GM12878 (cell line): ENCODE measurements at regions of chr5 and their contacts with region 1.

Region 1: DNA sequence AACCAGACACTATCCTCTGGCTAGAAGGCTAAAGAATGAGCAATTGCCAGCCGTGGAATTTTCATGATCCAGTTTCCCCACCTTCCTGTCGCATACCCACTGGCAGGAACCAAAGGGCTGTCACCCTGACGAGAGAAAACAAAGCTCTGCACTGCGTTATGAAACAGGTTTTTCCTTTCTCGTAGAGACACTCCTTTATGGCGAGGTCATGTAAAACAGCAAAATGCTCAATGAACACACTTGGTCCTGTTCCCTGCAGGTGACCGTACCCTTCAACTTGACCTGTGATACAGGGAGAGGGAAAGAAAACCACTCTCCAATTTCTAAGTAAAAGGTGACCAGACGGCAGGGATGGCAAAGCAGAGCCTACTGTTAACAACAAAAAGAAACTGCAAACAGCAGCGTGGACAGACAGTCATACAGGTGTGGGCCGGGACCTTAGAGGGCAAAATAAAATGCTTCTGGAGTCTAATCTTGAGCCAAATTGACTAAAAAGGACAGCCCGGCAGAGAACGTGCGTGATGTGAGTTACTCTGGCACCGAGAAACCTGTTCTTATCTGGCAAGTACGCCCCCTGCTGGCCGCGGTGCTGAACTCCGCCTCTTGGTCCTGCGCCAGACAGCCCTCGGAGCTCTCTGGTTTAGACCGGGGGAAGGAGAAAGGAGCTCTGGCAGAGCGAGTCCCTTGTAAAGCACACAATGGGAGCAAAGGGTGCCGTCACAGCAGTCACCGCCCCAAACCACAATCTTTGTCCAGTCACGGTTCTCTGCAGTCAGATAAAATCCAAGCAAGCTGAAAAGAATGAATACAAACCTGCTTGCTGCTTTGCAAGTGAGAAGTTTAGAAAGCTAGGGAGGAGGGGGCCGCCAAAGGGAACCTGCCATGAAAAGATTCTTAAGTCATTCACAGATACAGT is 98.9 kb downstream of the EFNA5 start:
- DNase-seq: peak; percentile 83
- ATAC-seq: peak; percentile 88
- H3K4me3 ChIP-seq: peak overlapping the region; percentile 64
- H3K27ac ChIP-seq: peak overlapping the region; percentile 95
- H3K4me1 ChIP-seq: peaks cover 27% of the 10 kb centered on the region
- H3K27me3 ChIP-seq: no peaks in the 10 kb centered on the region
- CTCF ChIP-seq: peak; percentile 92 to 94 (median 94)
- EP300 ChIP-seq: no peak
- POLR2A ChIP-seq: peak; percentile 63
- RAD21 ChIP-seq: peak; percentile 89

Region 2: DNA sequence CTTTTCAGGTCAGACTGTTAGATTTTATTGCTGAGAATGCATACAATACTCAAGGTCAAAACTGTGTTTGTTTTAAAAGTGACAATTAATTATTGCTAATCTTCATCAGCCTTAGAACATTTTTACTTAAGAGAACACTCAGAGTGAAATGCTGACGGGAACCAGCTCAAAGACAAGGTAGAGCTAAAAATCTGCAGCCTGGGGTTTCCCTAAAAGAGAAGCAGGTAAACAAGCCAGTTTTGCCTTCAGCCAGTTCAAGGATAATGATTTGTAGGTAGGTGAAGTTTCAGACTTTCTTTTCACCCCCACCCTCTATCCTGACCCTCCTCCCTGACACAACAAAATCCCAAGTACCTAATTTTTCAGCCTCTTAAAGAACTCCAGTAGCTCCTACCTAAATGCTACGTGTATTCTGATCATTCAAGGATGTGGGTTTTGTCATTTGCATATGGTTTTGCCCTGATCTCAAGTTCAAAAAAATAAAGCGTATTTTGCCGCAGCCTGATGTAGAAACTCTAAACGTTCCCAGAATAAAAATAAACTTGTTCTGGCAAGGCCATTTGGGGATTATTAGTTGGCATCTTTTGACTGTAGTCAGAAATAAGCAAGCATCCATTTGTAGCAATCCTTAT is 308.4 kb before region 1 on chr5:
- CTCF ChIA-PET with region 1: interaction called, 5 read pairs
- POLR2A ChIA-PET with region 1: no interaction called
- RAD21 ChIA-PET with region 1: interaction called, 13 read pairs
- SMC1A ChIA-PET with region 1: interaction called, 14 read pairs
- in situ Hi-C with region 1: no loop called
- intact Hi-C with region 1: no loop called
- DNase-seq: peak; percentile 73
- ATAC-seq: peak; percentile 87
- H3K4me3 ChIP-seq: no peak overlapping the region; the same call in 1 of the 2 replicates
- H3K27ac ChIP-seq: no peak overlapping the region
- H3K4me1 ChIP-seq: peaks cover 15% of the 10 kb centered on the region; the same call in 1 of the 2 replicates
- H3K27me3 ChIP-seq: no peaks in the 10 kb centered on the region
- CTCF ChIP-seq: no peak
- EP300 ChIP-seq: peak in 1 of 2 experiments; percentile 65; a peak in 1 of 4 replicates
- POLR2A ChIP-seq: no peak
- RAD21 ChIP-seq: no peak

Region 3: GRCh38 chr5:107359033-107359915 is 212.6 kb before region 1 on chr5:
- CTCF ChIA-PET with region 1: interaction called, 12 read pairs
- POLR2A ChIA-PET with region 1: interaction called, 12 read pairs
- RAD21 ChIA-PET with region 1: interaction called, 42 read pairs
- SMC1A ChIA-PET with region 1: interaction called, 30 read pairs
- in situ Hi-C with region 1: no loop called
- intact Hi-C with region 1: no loop called
- DNase-seq: no peak
- ATAC-seq: no peak; the same call in 2 of the 3 replicates
- H3K4me3 ChIP-seq: no peak overlapping the region
- H3K27ac ChIP-seq: no peak overlapping the region
- H3K4me1 ChIP-seq: peaks cover 6% of the 10 kb centered on the region; the same call in 1 of the 2 replicates
- H3K27me3 ChIP-seq: no peaks in the 10 kb centered on the region; a peak in 1 of 4 replicates
- CTCF ChIP-seq: no peak
- EP300 ChIP-seq: no peak
- POLR2A ChIP-seq: no peak
- RAD21 ChIP-seq: no peak

Region 4: GRCh38 chr5:107425541-107426256 is 146.2 kb before region 1 on chr5:
- CTCF ChIA-PET with region 1: interaction called, 8 read pairs
- POLR2A ChIA-PET with region 1: interaction called, 3 read pairs
- RAD21 ChIA-PET with region 1: interaction called, 7 read pairs
- SMC1A ChIA-PET with region 1: interaction called, 17 read pairs
- in situ Hi-C with region 1: no loop called
- intact Hi-C with region 1: no loop called
- DNase-seq: no peak
- ATAC-seq: no peak
- H3K4me3 ChIP-seq: no peak overlapping the region
- H3K27ac ChIP-seq: no peak overlapping the region
- H3K4me1 ChIP-seq: no peaks in the 10 kb centered on the region
- H3K27me3 ChIP-seq: no peaks in the 10 kb centered on the region; a peak in 1 of 4 replicates
- CTCF ChIP-seq: no peak
- EP300 ChIP-seq: no peak
- POLR2A ChIP-seq: no peak
- RAD21 ChIP-seq: no peak

Region 5: DNA sequence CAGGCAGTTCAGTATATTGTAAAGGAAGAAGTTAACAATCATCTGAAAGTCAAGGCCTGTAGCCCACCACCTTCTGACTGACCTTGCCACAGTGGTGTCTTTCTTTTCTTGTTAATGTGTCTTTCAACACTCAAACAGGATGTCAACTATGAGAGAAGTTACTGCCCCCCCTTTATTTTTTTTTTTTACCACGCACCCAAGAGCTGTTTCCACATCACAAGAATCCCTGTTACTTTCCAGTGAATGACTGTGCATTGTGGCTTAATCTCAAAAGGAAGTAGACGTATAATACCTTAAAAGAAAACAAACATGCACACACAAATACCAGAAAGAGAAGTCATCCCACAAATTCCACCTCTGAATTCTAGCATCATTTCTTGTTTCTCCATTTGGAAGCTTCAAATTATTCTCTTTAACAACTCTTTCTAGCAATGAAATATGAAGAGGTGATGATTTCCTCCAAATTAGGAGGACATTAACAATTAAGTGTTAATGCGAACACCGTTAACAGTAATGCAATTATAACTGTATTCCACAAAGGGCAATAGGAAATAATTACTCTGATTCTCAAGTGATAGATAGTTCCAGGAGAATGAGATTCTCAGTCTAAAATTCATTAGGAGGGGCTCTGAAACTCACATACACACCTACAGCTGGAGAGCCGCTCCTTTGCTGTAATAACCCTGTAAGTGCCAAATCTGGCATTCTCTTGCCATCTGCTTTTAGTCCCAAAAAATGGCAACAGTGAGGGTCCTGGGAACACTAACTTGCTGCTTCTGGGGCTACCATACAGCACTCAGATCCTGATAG is 102.2 kb before region 1 on chr5:
- CTCF ChIA-PET with region 1: interaction called, 8 read pairs
- POLR2A ChIA-PET with region 1: interaction called, 7 read pairs
- RAD21 ChIA-PET with region 1: interaction called, 16 read pairs
- SMC1A ChIA-PET with region 1: interaction called, 53 read pairs
- in situ Hi-C with region 1: no loop called
- intact Hi-C with region 1: no loop called
- DNase-seq: no peak
- ATAC-seq: no peak; the same call in 1 of the 3 replicates
- H3K4me3 ChIP-seq: no peak overlapping the region
- H3K27ac ChIP-seq: no peak overlapping the region
- H3K4me1 ChIP-seq: peaks cover under 1% of the 10 kb centered on the region; the same call in 1 of the 2 replicates
- H3K27me3 ChIP-seq: no peaks in the 10 kb centered on the region; a peak in 1 of 4 replicates
- CTCF ChIP-seq: no peak
- EP300 ChIP-seq: no peak
- POLR2A ChIP-seq: no peak
- RAD21 ChIP-seq: no peak

Region 6: GRCh38 chr5:107542428-107542827 is 29.5 kb before region 1 on chr5:
- CTCF ChIA-PET with region 1: interaction called, 34 read pairs
- POLR2A ChIA-PET with region 1: no interaction called
- RAD21 ChIA-PET with region 1: interaction called, 40 read pairs
- SMC1A ChIA-PET with region 1: interaction called, 58 read pairs
- in situ Hi-C with region 1: no loop called
- intact Hi-C with region 1: loop called (anchors 2 kb)
- DNase-seq: peak; percentile 52
- ATAC-seq: peak; percentile 75
- H3K4me3 ChIP-seq: no peak overlapping the region; the same call in 1 of the 2 replicates
- H3K27ac ChIP-seq: no peak overlapping the region
- H3K4me1 ChIP-seq: peaks cover 3% of the 10 kb centered on the region; the same call in 1 of the 2 replicates
- H3K27me3 ChIP-seq: no peaks in the 10 kb centered on the region
- CTCF ChIP-seq: no peak
- EP300 ChIP-seq: no peak
- POLR2A ChIP-seq: no peak
- RAD21 ChIP-seq: no peak

Region 7: DNA sequence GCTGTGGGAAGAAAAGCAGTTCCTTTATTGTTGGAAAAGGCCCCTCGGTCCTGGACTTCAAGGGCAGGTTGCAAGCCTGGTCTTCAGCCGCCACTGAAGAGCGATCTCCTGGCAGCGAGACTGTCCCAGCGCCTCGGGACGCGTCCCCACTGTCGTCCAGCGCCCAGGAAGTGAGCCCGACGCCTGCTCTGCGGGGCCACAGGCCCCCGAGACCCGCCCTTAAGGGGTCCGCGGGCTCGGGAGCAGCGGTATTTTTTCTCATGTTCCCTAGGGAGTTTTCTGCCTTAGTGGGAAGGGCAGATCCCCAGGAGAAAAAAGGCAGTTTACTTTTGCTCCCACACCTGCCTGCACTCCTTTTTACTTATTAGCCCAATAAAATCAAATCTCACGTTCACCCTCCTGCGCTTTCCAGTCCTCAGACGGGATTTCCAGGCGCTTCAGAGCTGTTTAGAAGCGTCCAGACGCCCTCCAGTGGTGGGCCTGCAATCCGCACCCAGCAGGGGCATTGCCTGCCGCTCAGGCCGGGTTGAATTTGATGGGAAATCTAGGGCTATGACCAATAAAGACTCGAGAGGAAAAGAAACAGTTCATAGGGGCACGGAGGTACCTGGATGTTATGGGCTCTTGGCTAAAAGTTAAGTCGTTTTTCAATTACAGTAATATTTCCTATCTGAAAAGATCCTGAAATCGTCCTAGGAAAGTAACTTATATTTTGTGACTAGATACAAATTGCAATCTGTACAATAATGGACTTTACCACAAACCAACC is 101.7 kb after region 1 on chr5:
- CTCF ChIA-PET with region 1: interaction called, 30 read pairs
- POLR2A ChIA-PET with region 1: interaction called, 5 read pairs
- RAD21 ChIA-PET with region 1: interaction called, 17 read pairs
- SMC1A ChIA-PET with region 1: interaction called, 5 read pairs
- in situ Hi-C with region 1: no loop called
- intact Hi-C with region 1: loop called (anchors 2 kb)
- DNase-seq: peak; percentile 59
- ATAC-seq: peak; percentile 72
- H3K4me3 ChIP-seq: peak overlapping the region; percentile 69
- H3K27ac ChIP-seq: peak overlapping the region; percentile 26; the same call in 1 of the 2 replicates
- H3K4me1 ChIP-seq: peaks cover 10% of the 10 kb centered on the region
- H3K27me3 ChIP-seq: peaks cover 0 to 4% of the 10 kb centered on the region in 2 experiments; a peak in 2 of 4 replicates
- CTCF ChIP-seq: peak; percentile 96 to 99 (median 97)
- EP300 ChIP-seq: no peak
- POLR2A ChIP-seq: no peak
- RAD21 ChIP-seq: peak; percentile 98